ENCODE measurements at regions of chr5 and their contacts with region 1.

Region 1: GRCh38 chr5:159987031-159987674 is 21.8 kb upstream of the TTC1 start:
- DNase-seq: peak; percentile 66 to 74
- ATAC-seq: peak; percentile 86 to 96 (median 92)
- H3K4me3 ChIP-seq: peak overlapping the region; percentile 17 to 54 (median 48)
- H3K27ac ChIP-seq: no peak overlapping the region
- H3K4me1 ChIP-seq: peaks cover 0 to 10% (median 0%) of the 10 kb centered on the region in 9 donors
- H3K27me3 ChIP-seq: peaks cover 0 to 46% (median 22%) of the 10 kb centered on the region in 7 donors
- CTCF ChIP-seq: peak; percentile 47 to 84 (median 70)

Region 2: DNA sequence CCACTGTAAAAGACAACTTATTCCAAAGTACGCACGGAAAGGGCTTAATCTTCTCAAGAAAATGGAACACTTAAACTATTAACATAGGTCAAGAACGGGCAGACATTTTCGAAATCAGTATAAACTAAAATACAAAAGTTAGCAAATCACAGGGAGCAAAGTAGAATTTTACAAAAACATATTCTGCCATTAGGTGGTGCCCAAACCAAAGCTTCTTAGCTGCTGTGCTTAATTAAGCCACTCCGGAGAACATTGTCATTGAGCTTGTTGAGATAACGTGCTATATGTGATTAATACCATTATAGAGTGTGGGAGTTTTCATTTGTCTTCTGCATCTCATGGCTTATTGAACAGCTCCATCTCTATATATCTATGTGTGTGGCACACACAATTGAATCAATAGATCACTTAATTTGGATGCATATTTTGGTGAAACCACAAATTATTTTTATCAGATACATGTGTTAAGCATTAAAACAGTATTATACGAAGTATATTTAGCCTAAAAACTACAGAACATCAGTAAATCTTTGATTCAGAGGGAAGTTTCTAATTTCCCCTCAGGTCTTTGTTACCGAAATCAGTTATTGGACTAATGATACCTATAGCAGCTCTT is 700.6 kb before region 1 on chr5:
- intact Hi-C with region 1: loop called in 8 of 10 experiments (anchors 5 to 10 kb)
- DNase-seq: no peak
- ATAC-seq: peak in 1 of 8 donors; percentile 50
- H3K4me3 ChIP-seq: no peak overlapping the region
- H3K27ac ChIP-seq: no peak overlapping the region
- H3K4me1 ChIP-seq: peaks cover 0 to 5% (median 0%) of the 10 kb centered on the region in 9 donors
- H3K27me3 ChIP-seq: no peaks in the 10 kb centered on the region
- CTCF ChIP-seq: peak in 8 of 9 donors; percentile 32 to 67 (median 54)

Region 3: GRCh38 chr5:159316519-159317383 is 670.4 kb before region 1 on chr5:
- intact Hi-C with region 1: loop called in 1 of 10 experiments (anchors 10 kb)
- DNase-seq: peak in 1 of 2 donors; percentile 19
- ATAC-seq: peak in 1 of 8 donors; percentile 69
- H3K4me3 ChIP-seq: no peak overlapping the region
- H3K27ac ChIP-seq: no peak overlapping the region
- H3K4me1 ChIP-seq: no peaks in the 10 kb centered on the region
- H3K27me3 ChIP-seq: peaks cover 0 to 22% (median 13%) of the 10 kb centered on the region in 7 donors
- CTCF ChIP-seq: peak; percentile 15 to 63 (median 55)

Region 4: GRCh38 chr5:159331093-159331973 is 655.8 kb before region 1 on chr5:
- intact Hi-C with region 1: loop called in 3 of 10 experiments (anchors 10 kb)
- DNase-seq: peak; percentile 56 to 73
- ATAC-seq: peak; percentile 82 to 93 (median 91)
- H3K4me3 ChIP-seq: peak overlapping the region; percentile 34 to 61 (median 50)
- H3K27ac ChIP-seq: peak overlapping the region in 5 of 10 donors; percentile 2 to 71 (median 48)
- H3K4me1 ChIP-seq: peaks cover 3 to 12% (median 10%) of the 10 kb centered on the region in 9 donors
- H3K27me3 ChIP-seq: peaks cover 0 to 33% (median 6%) of the 10 kb centered on the region in 7 donors
- CTCF ChIP-seq: peak; percentile 48 to 84 (median 78)

Region 5: GRCh38 chr5:159515909-159516415 is 471.2 kb before region 1 on chr5:
- intact Hi-C with region 1: loop called in 1 of 10 experiments (anchors 10 kb)
- DNase-seq: peak; percentile 17 to 53
- ATAC-seq: peak; percentile 49 to 78 (median 69)
- H3K4me3 ChIP-seq: no peak overlapping the region
- H3K27ac ChIP-seq: no peak overlapping the region
- H3K4me1 ChIP-seq: peaks cover 0 to 8% (median under 1%) of the 10 kb centered on the region in 9 donors
- H3K27me3 ChIP-seq: no peaks in the 10 kb centered on the region
- CTCF ChIP-seq: peak; percentile 45 to 72 (median 70)

Region 6: DNA sequence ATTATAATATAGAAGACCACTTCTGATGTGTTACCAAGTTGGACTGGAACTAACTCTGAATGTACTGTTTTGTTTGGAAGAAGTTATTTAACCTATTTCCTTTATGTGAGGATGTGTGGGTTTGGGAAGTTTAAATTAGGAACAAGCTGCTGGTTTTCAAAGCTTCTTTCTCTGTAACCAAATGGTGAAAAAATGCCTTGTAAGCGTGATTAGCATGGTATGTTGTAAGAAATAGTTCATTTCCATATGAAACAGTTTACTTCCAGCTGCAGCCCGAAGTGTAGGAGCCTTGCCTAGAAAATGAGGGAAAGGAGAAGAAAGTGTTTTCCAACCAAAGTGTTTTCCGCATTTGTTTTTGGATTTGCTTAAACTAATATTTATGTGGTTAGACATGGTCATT is 57.8 kb after region 1 on chr5:
- intact Hi-C with region 1: no loop called
- DNase-seq: no peak
- ATAC-seq: no peak
- H3K4me3 ChIP-seq: no peak overlapping the region
- H3K27ac ChIP-seq: no peak overlapping the region
- H3K4me1 ChIP-seq: peaks cover 0 to 19% (median 0%) of the 10 kb centered on the region in 9 donors
- H3K27me3 ChIP-seq: no peaks in the 10 kb centered on the region
- CTCF ChIP-seq: no peak